ENCODE measurements at regions of chr13 and their contacts with region 1.

Region 1: DNA sequence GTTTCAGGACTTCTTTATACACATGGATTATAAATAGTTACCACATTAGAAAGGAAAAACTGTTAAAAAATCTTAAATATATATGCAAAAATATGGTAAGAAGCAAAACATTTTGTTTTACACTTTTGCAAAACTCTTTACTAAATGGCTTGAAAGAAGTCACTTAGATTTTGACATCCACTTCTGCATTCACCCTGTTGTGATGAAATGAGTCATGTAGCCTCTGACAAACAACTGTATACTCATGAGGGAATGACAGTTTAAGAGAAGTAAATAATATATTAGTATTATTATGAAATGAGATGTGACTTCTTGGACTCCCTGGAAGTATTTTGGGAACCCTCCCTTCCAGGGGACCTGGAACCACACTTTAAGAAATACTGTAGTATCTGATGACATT is 275.6 kb downstream of the DACH1 start:
- DNase-seq: no peak
- ATAC-seq: no peak
- H3K4me3 Mint-ChIP-seq: no peak overlapping the region
- H3K27ac Mint-ChIP-seq: no peak overlapping the region
- H3K4me1 Mint-ChIP-seq: no peaks in the 10 kb centered on the region
- H3K27me3 Mint-ChIP-seq: no peaks in the 10 kb centered on the region
- CTCF ChIP-seq: no peak

Region 2: DNA sequence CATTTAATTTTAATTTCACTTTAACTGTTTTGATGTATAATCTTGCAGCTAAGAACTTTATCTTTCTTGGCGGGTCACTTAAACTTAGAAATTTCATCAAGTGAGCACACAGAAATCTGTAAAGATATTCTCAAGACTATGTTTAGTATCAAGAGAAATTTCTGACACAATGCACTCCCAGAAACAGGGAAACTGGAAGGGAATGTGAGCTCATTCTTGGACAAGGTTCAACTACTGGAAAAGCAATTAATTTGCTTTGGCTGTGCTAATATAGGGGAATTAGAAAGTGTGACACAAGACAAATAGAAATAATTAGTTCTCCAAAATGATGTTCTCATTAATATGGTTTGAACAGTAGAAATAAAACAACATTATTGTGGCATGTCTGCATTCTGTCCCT is 126.7 kb before region 1 on chr13:
- CTCF ChIA-PET with region 1: no interaction called
- POLR2A ChIA-PET with region 1: interaction called, 12 read pairs
- intact Hi-C with region 1: no loop called
- DNase-seq: no peak
- ATAC-seq: no peak
- H3K4me3 Mint-ChIP-seq: no peak overlapping the region
- H3K27ac Mint-ChIP-seq: no peak overlapping the region
- H3K4me1 Mint-ChIP-seq: peaks cover 2% of the 10 kb centered on the region
- H3K27me3 Mint-ChIP-seq: no peaks in the 10 kb centered on the region
- CTCF ChIP-seq: no peak

Region 3: DNA sequence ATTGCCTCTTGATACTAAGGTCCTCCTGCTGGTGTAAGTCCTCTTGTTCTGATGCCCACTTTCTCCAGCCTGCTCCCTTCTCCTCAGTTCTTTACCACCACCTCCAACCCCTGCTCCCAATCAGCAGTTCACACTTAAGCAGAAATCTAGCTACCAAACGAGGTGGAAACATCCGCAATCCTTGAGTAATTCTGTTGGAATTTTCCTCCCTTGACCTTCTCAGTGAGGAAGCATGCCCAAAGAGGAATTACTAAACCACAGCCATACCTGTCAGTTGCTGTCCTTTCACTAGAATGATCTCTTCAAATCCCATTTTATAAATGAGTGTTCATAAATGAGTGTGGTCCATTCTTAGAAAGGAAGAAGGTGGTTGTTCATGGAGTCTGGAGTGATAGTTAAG is 14.2 kb before region 1 on chr13:
- CTCF ChIA-PET with region 1: no interaction called
- POLR2A ChIA-PET with region 1: no interaction called
- intact Hi-C with region 1: no loop called
- DNase-seq: no peak
- ATAC-seq: no peak
- H3K4me3 Mint-ChIP-seq: no peak overlapping the region
- H3K27ac Mint-ChIP-seq: no peak overlapping the region
- H3K4me1 Mint-ChIP-seq: no peaks in the 10 kb centered on the region
- H3K27me3 Mint-ChIP-seq: no peaks in the 10 kb centered on the region
- CTCF ChIP-seq: no peak

Measured in activated B cell treated with CpG ODN at 0.5 μM for 24 hours (primary cell).